Right cardiac atrium (tissue), 5 donors: ENCODE measurements at regions of chr3 and their contacts with region 1.

Region 1: GRCh38 chr3:128497387-128498126 is 4.6 kb upstream of the GATA2 start:
- DNase-seq: peak; percentile 78 to 91 (median 90)
- ATAC-seq: peak; percentile 72 to 75
- H3K4me3 ChIP-seq: peak overlapping the region; percentile 69
- H3K27ac ChIP-seq: no peak overlapping the region
- H3K4me1 ChIP-seq: no peaks in the 10 kb centered on the region
- H3K27me3 ChIP-seq: no peaks in the 10 kb centered on the region

Region 2: GRCh38 chr3:128075516-128076482 is 421.8 kb before region 1 on chr3:
- intact Hi-C with region 1: loop called in 1 of 4 experiments (anchors 10 kb)
- DNase-seq: peak; percentile 90 to 97 (median 97)
- ATAC-seq: peak; percentile 84 to 89
- H3K4me3 ChIP-seq: peak overlapping the region; percentile 43
- H3K27ac ChIP-seq: peak overlapping the region; percentile 60
- H3K4me1 ChIP-seq: peaks cover 6% of the 10 kb centered on the region
- H3K27me3 ChIP-seq: no peaks in the 10 kb centered on the region

Region 3: DNA sequence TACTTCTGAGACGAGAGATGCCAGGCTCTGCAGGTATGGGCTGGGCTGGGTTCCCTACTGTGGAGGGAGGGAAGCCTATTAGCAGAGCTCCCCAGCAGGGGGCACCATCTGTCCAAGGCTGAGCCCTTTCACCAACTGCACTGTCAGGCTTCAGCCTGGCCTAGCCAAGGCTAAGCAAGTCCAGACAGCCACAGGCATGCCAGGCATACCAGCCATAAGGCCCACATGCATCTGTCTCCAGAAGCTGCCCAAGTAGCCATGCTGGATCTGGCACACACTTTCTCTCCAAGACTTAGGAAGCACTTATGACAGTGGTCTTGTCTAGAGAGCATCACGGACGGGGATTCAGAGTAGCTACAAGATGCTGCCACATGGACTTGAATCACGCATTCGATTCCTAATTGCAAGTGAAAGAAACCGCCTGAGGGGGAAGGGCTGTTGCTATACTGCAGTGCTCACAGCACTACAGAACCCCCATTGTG is 402.3 kb before region 1 on chr3:
- intact Hi-C with region 1: loop called in 1 of 4 experiments (anchors 10 kb)
- DNase-seq: peak; percentile 83 to 93 (median 91)
- ATAC-seq: peak; percentile 94 to 96
- H3K4me3 ChIP-seq: no peak overlapping the region
- H3K27ac ChIP-seq: no peak overlapping the region
- H3K4me1 ChIP-seq: no peaks in the 10 kb centered on the region
- H3K27me3 ChIP-seq: no peaks in the 10 kb centered on the region

Region 4: DNA sequence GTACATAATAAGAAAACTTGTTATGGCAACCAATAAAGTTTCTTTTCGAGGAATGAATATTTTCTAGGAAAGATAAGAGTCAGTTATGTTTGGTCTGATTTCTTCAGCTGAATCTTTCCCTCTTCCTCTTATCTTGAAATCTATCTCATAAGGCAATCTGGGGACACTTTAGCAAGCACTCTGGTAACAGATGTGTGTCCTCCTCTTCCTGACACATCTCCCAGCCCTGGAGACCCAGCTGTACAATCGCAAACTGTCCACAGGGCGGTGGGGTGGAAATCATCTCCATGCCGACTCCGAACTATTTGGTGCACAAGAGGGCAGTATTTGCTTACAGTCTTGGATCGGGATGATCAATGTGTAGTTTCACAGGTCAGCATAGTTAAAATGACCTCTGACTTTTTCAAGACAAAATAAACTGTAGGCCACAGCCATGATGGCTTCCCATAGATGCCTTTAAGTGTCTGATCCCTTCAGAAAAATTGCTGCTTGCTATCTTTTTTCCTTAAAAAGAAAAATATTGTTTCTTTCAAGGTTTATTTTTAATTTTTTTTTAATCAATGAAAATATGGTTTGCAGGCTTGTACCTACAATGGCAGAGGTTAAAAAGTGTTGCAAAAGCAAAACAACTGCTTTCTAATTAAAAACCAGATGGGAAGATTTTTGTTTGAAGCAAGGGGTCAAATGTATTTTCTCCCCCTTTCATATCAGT is 326.6 kb before region 1 on chr3:
- intact Hi-C with region 1: loop called in 3 of 4 experiments (anchors 5 to 10 kb)
- DNase-seq: peak; percentile 61 to 80 (median 72)
- ATAC-seq: peak; percentile 82 to 84
- H3K4me3 ChIP-seq: no peak overlapping the region
- H3K27ac ChIP-seq: no peak overlapping the region
- H3K4me1 ChIP-seq: peaks cover 12% of the 10 kb centered on the region
- H3K27me3 ChIP-seq: no peaks in the 10 kb centered on the region

Region 5: DNA sequence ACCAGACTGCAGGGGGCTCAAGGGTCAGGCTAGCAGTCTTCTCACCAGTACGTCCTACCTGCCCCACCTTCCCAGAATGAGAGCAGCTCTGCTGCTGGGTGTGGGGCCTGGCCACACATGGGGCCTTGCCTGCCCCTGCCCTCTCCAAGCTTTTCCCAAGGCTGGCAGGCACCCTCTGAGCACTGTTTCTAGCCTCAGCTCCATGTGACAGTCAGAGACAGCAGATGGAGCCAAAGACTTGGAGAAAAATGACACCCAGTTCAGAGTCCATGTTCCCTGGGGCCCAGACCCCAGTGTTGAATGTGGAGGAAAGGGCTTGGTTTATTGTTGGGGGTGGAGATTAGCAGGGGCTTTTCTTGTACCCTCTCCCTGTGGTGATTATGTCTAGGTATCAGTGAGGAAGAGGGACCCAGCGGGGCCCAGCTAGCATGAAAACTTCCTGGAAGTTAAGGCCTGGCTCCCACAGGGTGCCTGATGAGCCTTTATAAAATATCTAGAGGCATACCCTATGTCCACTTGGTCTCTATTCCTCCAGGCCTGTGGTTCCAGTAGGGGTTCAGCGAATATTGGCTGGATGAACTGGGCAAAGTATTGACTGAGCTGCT is 190.4 kb before region 1 on chr3:
- intact Hi-C with region 1: loop called in 1 of 4 experiments (anchors 5 kb)
- DNase-seq: no peak
- ATAC-seq: peak in 1 of 2 donors; percentile 9
- H3K4me3 ChIP-seq: no peak overlapping the region
- H3K27ac ChIP-seq: no peak overlapping the region
- H3K4me1 ChIP-seq: peaks cover 12% of the 10 kb centered on the region
- H3K27me3 ChIP-seq: no peaks in the 10 kb centered on the region

Region 6: DNA sequence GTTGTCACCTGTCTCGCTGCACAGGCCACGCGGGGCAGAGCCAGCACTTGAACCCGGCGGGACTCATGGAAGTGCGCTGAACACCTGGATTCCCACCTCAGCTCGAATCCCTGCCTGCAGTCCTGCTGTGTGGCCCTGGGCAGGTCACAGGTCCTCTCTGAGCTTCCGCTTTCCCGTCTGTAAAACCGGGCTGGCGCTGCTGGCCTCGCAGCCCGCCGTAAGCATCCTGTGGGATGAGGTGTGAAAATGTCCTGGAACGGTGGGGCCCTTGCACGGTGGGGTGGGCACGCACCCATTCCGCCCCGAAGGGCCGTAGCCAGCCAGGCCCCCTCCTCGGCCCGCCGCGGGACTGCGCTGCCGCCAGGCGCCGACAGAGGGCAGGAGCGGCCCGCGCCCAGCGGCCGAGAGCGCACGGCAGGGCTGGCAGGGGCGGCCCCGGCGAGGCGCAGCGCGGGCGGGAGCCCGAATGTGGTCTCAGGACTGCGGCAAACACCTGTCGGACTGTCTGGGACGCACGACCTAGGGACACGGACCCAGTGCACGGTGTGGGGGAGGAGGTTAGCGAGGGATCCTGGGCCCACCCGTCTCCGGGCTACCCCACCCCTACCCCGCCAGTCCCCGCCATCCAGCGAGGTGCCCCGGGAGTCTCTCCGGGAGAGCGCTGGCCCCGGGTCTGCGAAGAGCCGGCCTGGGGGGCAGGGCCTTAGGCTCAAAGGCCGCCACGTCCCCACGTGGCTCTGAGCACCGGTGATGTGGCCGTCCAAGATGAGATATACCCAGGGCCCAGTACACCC is 71.2 kb before region 1 on chr3:
- intact Hi-C with region 1: loop called (anchors 5 to 10 kb)
- DNase-seq: peak; percentile 44 to 81 (median 80)
- ATAC-seq: peak; percentile 85 to 87
- H3K4me3 ChIP-seq: peak overlapping the region; percentile 37
- H3K27ac ChIP-seq: no peak overlapping the region
- H3K4me1 ChIP-seq: no peaks in the 10 kb centered on the region
- H3K27me3 ChIP-seq: no peaks in the 10 kb centered on the region